Activated T-helper 2 cell treated with anti-CD3 and anti-CD28 coated beads, Interferon-gamma antibody, Interleukin-2, Interleukin-4, amounts not matched to agents 10 μg/mL and 5 μg/mL and 100 μg/mL, durations not matched to agents 14 hours and 24 hours and 36 hours (primary cell): ENCODE measurements at regions of chr16 and their contacts with region 1.

Region 1: GRCh38 chr16:76428858-76429257 is 151.7 kb downstream of the CNTNAP4 start:
- DNase-seq: no peak
- H3K4me3 Mint-ChIP-seq: no peak overlapping the region
- H3K27ac Mint-ChIP-seq: no peak overlapping the region
- H3K4me1 Mint-ChIP-seq: no peaks in the 10 kb centered on the region
- H3K27me3 Mint-ChIP-seq: no peaks in the 10 kb centered on the region

Region 2: DNA sequence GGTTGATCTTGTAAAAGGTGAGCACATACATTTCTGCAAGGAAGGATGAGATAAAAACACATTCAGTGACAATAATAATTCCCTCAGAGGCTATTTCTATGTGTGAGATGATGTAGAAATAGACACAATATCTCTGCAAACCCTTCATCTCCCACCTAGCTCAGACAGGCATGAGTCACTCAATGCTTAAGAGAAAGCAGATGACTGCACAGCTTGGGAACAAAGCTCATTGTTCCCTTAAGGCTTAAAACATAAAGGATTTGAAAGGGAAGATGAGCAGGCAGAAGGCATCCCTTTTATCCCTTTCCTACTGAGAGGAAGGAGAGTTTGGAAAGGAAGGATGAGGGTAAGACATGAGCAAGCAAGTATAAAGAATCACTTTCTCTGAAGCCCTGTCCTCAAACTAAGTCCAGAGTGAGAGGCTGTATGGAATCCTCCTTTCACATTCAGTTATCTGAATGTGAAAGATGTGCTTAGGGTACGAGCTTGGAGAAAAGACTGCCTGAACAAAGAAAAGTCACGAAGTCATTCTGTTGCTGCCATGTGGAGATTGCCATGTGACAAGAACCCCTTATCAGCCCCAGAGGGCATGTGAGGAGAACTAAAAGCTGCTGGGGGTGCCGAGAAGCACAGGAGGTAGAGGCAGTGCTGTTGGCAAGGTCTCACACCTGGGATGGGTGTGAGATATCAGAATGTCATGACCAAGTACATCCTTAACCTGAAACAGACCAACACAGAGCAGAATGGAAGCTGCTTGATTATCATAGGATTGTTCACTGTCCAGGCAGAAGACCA is 93.5 kb before region 1 on chr16:
- intact Hi-C with region 1: no loop called
- DNase-seq: no peak
- H3K4me3 Mint-ChIP-seq: no peak overlapping the region
- H3K27ac Mint-ChIP-seq: no peak overlapping the region
- H3K4me1 Mint-ChIP-seq: no peaks in the 10 kb centered on the region
- H3K27me3 Mint-ChIP-seq: no peaks in the 10 kb centered on the region

Region 3: GRCh38 chr16:76389126-76389525 is 39.7 kb before region 1 on chr16:
- intact Hi-C with region 1: loop called (anchors 1 kb)
- DNase-seq: no peak
- H3K4me3 Mint-ChIP-seq: no peak overlapping the region
- H3K27ac Mint-ChIP-seq: no peak overlapping the region
- H3K4me1 Mint-ChIP-seq: no peaks in the 10 kb centered on the region
- H3K27me3 Mint-ChIP-seq: no peaks in the 10 kb centered on the region

Region 4: DNA sequence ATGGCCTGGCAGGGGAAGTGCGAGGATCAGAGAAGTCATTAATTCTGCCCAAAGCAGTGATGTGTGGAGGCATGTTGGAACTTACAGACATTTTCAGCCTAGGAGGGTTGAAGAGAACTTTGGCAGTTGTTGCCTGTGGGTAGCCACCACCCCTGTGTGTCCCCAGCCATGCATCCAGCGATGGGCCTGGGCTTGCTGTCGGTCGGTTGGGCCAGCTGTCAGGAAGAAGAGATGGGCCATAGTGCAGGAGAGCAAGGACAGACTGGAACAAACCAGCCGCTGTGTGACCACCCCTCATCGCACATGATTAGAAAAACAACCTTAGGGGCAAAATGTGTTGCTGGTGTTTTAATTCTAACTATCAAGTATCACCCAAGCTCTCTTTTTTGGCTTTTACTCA is 22.0 kb after region 1 on chr16:
- intact Hi-C with region 1: no loop called
- DNase-seq: no peak
- H3K4me3 Mint-ChIP-seq: no peak overlapping the region
- H3K27ac Mint-ChIP-seq: no peak overlapping the region
- H3K4me1 Mint-ChIP-seq: no peaks in the 10 kb centered on the region
- H3K27me3 Mint-ChIP-seq: no peaks in the 10 kb centered on the region

Region 5: GRCh38 chr16:76541070-76541469 is 112.2 kb after region 1 on chr16:
- intact Hi-C with region 1: no loop called
- DNase-seq: no peak
- H3K4me3 Mint-ChIP-seq: no peak overlapping the region
- H3K27ac Mint-ChIP-seq: no peak overlapping the region
- H3K4me1 Mint-ChIP-seq: no peaks in the 10 kb centered on the region
- H3K27me3 Mint-ChIP-seq: no peaks in the 10 kb centered on the region

Region 6: DNA sequence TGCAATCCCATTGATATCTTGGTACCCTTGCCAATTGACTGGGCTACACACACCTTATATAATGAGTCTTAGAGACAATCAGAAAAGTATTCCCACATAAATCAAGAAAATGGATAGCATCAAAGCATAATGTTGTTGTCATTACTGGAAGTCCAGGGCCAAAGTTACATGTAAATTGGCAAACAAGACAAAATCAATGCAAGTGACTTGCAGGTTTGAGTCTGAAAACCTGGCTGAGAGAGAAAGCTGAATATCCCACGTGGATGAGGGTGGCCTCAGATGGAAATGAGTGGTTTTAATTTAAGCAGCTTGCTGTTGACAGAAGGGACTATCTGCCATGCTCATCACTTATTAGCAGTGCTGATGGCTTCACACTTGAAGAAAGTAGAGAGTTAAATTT is 438.1 kb after region 1 on chr16:
- intact Hi-C with region 1: no loop called
- DNase-seq: no peak
- H3K4me3 Mint-ChIP-seq: no peak overlapping the region
- H3K27ac Mint-ChIP-seq: no peak overlapping the region
- H3K4me1 Mint-ChIP-seq: no peaks in the 10 kb centered on the region
- H3K27me3 Mint-ChIP-seq: no peaks in the 10 kb centered on the region